CD14-positive monocyte (primary cell): ENCODE measurements at regions of chr19 and their contacts with region 1.

Region 1: DNA sequence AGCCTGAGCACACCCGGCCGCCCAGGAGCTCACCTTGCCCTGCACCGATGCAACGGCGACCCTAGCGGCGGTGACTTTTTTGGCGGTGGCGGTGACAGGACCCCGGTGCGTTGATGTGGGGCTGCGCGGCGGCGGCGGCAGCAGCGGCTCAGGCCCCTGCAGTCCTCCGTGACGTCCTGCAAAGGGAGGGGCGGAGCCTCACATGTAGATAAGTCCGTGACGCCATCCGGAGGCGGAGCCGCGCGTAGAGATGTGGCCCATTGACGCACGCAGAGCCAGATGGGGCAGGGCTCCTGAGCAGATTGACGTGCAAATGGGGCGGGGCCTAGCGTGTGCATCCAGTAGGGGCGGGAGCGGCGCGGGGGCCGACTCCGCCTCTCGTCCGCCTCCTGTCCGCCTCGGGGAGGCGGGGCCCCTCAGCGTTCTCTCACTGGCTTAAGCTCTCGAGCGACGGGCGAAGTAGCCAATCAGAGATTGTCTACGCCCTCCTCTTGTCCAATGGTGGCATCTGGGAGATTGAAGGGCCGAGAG is at the start of gene RAB3A:
- DNase-seq: peak; percentile 100
- H3K4me3 ChIP-seq: peak within 1 kb of the TSS; percentile 51 to 89 (median 82)
- H3K4me3 Mint-ChIP-seq: peak within 1 kb of the TSS; percentile 90 to 94
- H3K27ac ChIP-seq: peak within 1 kb of the TSS; percentile 70 to 85
- H3K27ac Mint-ChIP-seq: peak within 1 kb of the TSS; percentile 94 to 98 (median 97)
- H3K4me1 ChIP-seq: peaks cover 23 to 29% of the 10 kb centered on the region in 2 donors
- H3K4me1 Mint-ChIP-seq: peaks cover 24% of the 10 kb centered on the region
- H3K27me3 ChIP-seq: peaks cover 0 to 10% of the 10 kb centered on the region in 2 donors
- H3K27me3 Mint-ChIP-seq: peaks cover 17 to 27% (median 23%) of the 10 kb centered on the region in 3 donors
- CTCF ChIP-seq: no peak
- polyA plus RNA-seq, gene RAB3A: 0.55 to 8.7 (median 0.56) TPM

Region 2: DNA sequence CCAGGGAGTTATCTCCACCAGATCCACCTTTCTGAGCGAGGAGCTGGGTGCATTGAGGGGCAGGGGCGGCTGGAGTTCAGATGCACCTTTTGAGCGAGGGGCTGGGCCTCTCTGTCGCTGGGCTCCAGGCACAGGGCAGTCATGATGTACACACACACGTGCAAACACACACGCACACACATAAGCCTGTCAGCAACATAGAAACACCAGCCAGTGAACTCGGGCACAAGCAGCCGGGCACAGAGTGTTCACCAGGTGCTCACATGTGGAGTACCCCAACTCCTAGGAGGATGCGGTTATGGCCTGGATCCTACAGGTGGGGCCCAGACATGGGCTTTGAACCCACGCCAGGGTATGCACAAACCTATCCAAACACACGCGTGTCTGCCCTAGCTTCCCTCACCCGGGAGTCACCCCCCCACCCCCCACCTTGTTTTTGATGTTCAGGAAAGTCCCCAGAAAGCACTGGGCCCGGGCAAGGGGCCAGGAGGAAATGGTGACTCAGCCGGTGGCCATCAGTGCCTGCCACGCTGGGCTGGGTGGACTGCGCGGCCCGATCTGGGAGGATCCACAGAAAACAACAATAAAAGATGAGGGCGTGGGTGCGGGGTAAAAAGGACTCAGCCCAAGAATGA is 182.7 kb before region 1 on chr19:
- intact Hi-C with region 1: no loop called
- DNase-seq: peak; percentile 96 to 98 (median 97)
- H3K4me3 ChIP-seq: peak overlapping the region in 2 of 3 experiments; percentile 28 to 46
- H3K4me3 Mint-ChIP-seq: peak overlapping the region; percentile 70 to 86
- H3K27ac ChIP-seq: peak overlapping the region; percentile 94 to 97
- H3K27ac Mint-ChIP-seq: peak overlapping the region; percentile 94 to 100 (median 97)
- H3K4me1 ChIP-seq: peaks cover 78 to 82% of the 10 kb centered on the region in 2 donors
- H3K4me1 Mint-ChIP-seq: peaks cover 78% of the 10 kb centered on the region
- H3K27me3 ChIP-seq: no peaks in the 10 kb centered on the region
- H3K27me3 Mint-ChIP-seq: peaks cover 0 to 8% (median 4%) of the 10 kb centered on the region in 3 donors
- CTCF ChIP-seq: no peak

Region 3: GRCh38 chr19:18152444-18152816 is 51.5 kb before region 1 on chr19:
- intact Hi-C with region 1: loop called in 1 of 2 experiments (anchors 10 kb)
- DNase-seq: peak; percentile 99 to 100 (median 100)
- H3K4me3 ChIP-seq: peak overlapping the region; percentile 65 to 92 (median 89)
- H3K4me3 Mint-ChIP-seq: peak overlapping the region; percentile 87 to 93
- H3K27ac ChIP-seq: peak overlapping the region; percentile 94 to 100
- H3K27ac Mint-ChIP-seq: peak overlapping the region; percentile 95 to 99 (median 97)
- H3K4me1 ChIP-seq: peaks cover 30 to 42% of the 10 kb centered on the region in 2 donors
- H3K4me1 Mint-ChIP-seq: peaks cover 36% of the 10 kb centered on the region
- H3K27me3 ChIP-seq: no peaks in the 10 kb centered on the region
- H3K27me3 Mint-ChIP-seq: peaks cover 0 to 2% (median 1%) of the 10 kb centered on the region in 3 donors
- CTCF ChIP-seq: peak; percentile 93

Region 4: DNA sequence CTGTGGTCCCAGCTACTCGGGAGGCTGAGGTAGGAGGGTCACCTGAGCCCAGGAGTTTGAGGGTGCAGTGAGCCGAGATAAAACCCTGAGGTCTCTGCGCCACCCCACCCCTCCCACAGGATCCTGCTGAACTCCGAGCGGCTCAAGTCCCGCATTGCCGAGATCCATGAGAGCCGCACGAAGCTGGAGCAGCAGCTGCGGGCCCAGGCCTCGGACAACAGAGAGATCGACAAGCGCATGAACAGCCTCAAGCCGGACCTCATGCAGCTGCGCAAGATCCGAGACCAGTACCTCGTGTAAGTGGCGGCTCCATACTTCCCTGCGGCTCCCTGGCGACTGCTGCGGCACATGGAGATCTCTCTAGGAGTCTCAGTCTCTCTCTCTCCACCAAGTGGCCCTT is 36.9 kb before region 1 on chr19:
- intact Hi-C with region 1: no loop called
- DNase-seq: no peak
- H3K4me3 ChIP-seq: no peak overlapping the region
- H3K4me3 Mint-ChIP-seq: no peak overlapping the region
- H3K27ac ChIP-seq: no peak overlapping the region
- H3K27ac Mint-ChIP-seq: no peak overlapping the region
- H3K4me1 ChIP-seq: peaks cover 42 to 46% of the 10 kb centered on the region in 2 donors
- H3K4me1 Mint-ChIP-seq: peaks cover 39% of the 10 kb centered on the region
- H3K27me3 ChIP-seq: no peaks in the 10 kb centered on the region
- H3K27me3 Mint-ChIP-seq: peaks cover 0 to 1% (median 0%) of the 10 kb centered on the region in 3 donors
- CTCF ChIP-seq: no peak

Region 5: DNA sequence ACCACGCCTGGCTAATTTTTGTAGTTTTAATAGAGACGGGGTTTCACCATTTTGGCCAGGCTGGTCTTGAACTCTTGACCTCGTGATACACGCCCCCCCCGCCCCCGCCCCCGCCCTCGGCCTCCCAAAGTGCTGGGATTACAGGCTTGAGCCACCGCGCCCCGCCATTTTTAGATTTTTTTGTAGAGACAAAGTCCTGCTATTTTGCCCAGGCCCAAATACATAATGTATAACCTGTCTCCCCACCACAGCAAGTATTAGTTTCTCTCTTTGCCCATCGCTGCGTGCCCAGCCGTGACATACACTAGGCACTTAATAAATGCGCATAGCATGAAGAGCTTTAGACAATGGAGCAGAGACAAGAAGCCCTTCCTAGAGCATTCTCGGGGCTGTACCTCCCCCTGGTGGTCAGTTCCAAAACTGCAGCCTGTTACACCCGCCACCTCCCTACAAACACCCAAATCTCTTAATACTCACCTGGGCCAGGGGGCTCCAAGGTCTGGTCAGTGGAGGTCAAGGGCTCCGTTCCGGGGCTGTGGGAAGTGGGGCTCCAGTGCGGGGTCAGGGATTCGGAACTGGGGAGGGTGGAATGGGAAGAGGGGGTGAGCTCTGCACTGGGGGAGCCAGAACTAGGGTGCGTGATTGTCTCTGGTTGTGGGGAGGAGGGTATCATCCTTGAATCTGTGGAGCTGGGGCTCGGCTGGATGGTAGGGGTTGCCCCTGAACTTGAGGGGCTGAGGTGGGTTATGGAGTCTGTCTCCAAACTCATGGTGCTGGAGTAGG is 47.9 kb after region 1 on chr19:
- intact Hi-C with region 1: loop called (anchors 1 kb)
- DNase-seq: peak; percentile 56 to 77 (median 76)
- H3K4me3 ChIP-seq: no peak overlapping the region
- H3K4me3 Mint-ChIP-seq: peak overlapping the region in 1 of 2 donors; percentile 16
- H3K27ac ChIP-seq: no peak overlapping the region
- H3K27ac Mint-ChIP-seq: peak overlapping the region in 1 of 7 donors; percentile 42
- H3K4me1 ChIP-seq: peaks cover 20 to 25% of the 10 kb centered on the region in 2 donors
- H3K4me1 Mint-ChIP-seq: peaks cover 21% of the 10 kb centered on the region
- H3K27me3 ChIP-seq: peaks cover 0 to 2% of the 10 kb centered on the region in 2 donors
- H3K27me3 Mint-ChIP-seq: peaks cover 5 to 27% (median 10%) of the 10 kb centered on the region in 3 donors
- CTCF ChIP-seq: peak; percentile 84

Region 6: DNA sequence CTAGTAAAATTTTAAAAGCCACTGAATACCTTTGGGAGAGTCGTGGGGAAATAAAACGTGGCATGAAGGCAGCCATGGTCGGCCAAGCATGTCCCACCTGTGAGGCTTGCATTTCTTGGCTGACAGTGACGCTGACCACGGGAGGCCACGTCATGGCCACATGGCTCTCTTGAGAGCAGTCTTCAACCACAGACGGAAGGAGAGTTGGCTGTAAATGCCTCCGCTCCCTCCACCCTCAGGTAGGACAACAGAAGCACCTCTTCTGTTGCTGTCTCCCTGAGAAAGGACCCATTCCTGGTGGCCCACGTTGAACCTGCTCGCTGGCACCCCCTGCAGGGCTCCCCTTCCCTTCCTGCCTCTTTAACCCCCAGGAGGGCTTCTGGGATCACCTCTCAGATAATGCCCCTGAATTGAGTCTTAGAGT is 204.1 kb after region 1 on chr19:
- intact Hi-C with region 1: loop called (anchors 5 to 10 kb)
- DNase-seq: peak; percentile 35 to 59 (median 58)
- H3K4me3 ChIP-seq: no peak overlapping the region
- H3K4me3 Mint-ChIP-seq: no peak overlapping the region
- H3K27ac ChIP-seq: no peak overlapping the region
- H3K27ac Mint-ChIP-seq: peak overlapping the region in 3 of 7 donors; percentile 35 to 62 (median 45)
- H3K4me1 ChIP-seq: peaks cover 20 to 32% of the 10 kb centered on the region in 2 donors
- H3K4me1 Mint-ChIP-seq: peaks cover 31% of the 10 kb centered on the region
- H3K27me3 ChIP-seq: no peaks in the 10 kb centered on the region
- H3K27me3 Mint-ChIP-seq: peaks cover 2 to 6% (median 6%) of the 10 kb centered on the region in 3 donors
- CTCF ChIP-seq: peak; percentile 75

Region 7: GRCh38 chr19:18419195-18419698 is 215.3 kb after region 1 on chr19 and contains the start of gene SSBP4:
- intact Hi-C with region 1: loop called in 1 of 2 experiments (anchors 10 kb)
- DNase-seq: peak; percentile 64 to 69 (median 69)
- H3K4me3 ChIP-seq: peak within 1 kb of the TSS; percentile 49 to 74 (median 59)
- H3K4me3 Mint-ChIP-seq: peak within 1 kb of the TSS; percentile 83 to 91
- H3K27ac ChIP-seq: peak within 1 kb of the TSS; percentile 99
- H3K27ac Mint-ChIP-seq: peak within 1 kb of the TSS; percentile 93 to 100 (median 97)
- H3K4me1 ChIP-seq: peaks cover 67 to 85% of the 10 kb centered on the region in 2 donors
- H3K4me1 Mint-ChIP-seq: peaks cover 75% of the 10 kb centered on the region
- H3K27me3 ChIP-seq: no peaks in the 10 kb centered on the region
- H3K27me3 Mint-ChIP-seq: peaks cover 0 to 6% (median 2%) of the 10 kb centered on the region in 3 donors
- CTCF ChIP-seq: peak; percentile 64
- polyA plus RNA-seq, gene SSBP4: 38.5 to 74.5 (median 48.3) TPM